H1 (cell line): ENCODE measurements at regions of chr21 and their contacts with region 1.

Region 1: GRCh38 chr21:44438531-44439207 is 16.6 kb upstream of the LRRC3 start:
- DNase-seq: no peak
- H3K4me3 ChIP-seq: no peak overlapping the region
- H3K27ac ChIP-seq: no peak overlapping the region
- H3K4me1 ChIP-seq: no peaks in the 10 kb centered on the region; a peak in 1 of 7 replicates
- H3K27me3 ChIP-seq: no peaks in the 10 kb centered on the region
- CTCF ChIP-seq: no peak
- EP300 ChIP-seq: no peak
- POLR2A ChIP-seq: no peak
- RAD21 ChIP-seq: no peak

Region 2: DNA sequence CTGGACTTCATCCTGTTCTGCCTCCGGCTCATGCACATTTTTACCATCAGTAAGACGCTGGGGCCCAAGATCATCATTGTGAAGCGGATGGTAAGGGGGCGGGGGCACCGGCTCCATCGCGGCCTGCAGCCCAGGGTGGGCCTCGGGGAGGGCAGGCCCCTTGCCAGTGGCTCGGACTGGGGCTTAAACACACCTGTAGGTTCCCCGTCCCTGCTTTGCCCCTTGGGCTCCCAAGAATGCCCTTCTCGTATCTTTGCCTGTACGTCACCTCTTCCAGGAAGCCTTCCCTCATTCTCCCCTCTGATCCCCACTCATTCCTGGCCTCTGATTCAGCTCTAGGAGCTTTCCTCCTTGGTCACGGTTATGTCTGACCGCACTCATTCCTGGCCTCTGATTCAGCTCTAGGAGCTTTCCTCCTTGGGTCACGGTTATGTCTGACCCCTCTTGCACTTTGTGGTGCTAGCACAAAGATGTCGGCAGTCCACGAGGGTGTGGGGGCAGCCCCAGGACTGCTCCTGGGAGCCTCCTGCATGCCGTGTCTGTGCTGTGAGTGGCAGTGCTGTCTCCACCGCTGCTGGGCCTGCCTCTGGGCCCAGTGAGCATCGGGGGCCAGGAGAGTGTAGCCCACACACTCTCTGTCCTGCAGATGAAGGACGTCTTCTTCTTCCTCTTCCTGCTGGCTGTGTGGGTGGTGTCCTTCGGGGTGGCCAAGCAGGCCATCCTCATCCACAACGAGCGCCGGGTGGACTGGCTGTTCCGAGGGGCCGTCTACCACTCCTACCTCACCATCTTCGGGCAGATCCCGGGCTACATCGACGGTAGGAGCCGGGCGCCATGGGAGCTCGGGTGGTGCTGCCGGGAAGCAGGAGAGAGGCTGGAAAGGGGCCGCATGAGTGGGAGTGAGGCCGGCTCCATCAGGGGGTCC is 32.5 kb before region 1 on chr21:
- CTCF ChIA-PET with region 1: no interaction called
- POLR2A ChIA-PET with region 1: no interaction called
- DNase-seq: no peak
- H3K4me3 ChIP-seq: no peak overlapping the region
- H3K27ac ChIP-seq: no peak overlapping the region
- H3K4me1 ChIP-seq: no peaks in the 10 kb centered on the region
- H3K27me3 ChIP-seq: no peaks in the 10 kb centered on the region
- CTCF ChIP-seq: no peak
- EP300 ChIP-seq: no peak
- POLR2A ChIP-seq: no peak
- RAD21 ChIP-seq: no peak

Region 3: DNA sequence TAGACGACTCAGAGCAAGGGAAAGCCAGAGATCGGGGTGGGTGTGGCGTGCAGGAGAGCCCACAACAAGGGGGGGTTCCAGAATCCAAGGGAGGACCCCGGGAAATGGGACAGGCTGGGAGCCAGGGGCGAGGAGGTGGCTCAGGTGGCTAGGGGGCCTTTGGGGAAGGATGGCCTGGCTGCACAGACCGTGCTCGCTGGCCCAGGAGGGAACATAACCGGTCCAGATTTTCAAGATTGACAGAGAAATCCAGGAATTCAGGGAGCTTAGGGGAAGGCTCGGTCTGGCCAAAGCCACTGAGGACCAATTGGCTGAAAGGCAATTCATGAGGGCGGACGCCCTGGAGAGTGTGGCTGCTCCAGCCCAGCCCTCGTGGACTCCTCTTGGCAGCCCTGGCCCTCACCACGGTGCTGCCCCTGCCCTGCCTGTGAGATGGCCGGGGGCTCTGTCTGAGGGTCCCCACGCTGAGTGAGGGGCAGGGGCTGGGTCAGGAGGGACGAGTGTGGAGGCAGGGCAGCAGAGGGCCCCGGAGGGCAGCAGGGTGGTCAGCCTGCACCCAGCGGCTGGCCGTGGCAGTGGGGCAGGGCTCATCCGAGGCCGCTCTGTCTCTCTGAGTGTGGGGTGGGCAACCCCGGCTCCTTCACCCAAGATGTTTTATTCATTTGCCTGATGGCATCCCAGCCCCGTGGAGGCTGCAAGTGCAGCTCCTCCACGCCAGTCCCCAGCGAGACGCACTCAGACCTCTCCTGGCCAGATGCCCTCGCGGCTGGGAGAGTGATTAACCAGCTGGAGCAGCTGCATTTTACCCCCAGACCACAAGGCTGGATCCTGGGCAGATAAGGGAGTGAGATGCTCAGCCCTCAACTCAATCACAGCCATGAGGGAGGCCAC is 11.0 kb after region 1 on chr21:
- CTCF ChIA-PET with region 1: interaction called, 20 read pairs
- POLR2A ChIA-PET with region 1: no interaction called
- DNase-seq: no peak
- H3K4me3 ChIP-seq: no peak overlapping the region
- H3K27ac ChIP-seq: no peak overlapping the region
- H3K4me1 ChIP-seq: peaks cover 0 to 2% (median 0%) of the 10 kb centered on the region in 4 experiments; a peak in 1 of 7 replicates
- H3K27me3 ChIP-seq: no peaks in the 10 kb centered on the region
- CTCF ChIP-seq: no peak
- EP300 ChIP-seq: no peak
- POLR2A ChIP-seq: no peak
- RAD21 ChIP-seq: no peak